Motor neuron (in vitro differentiated cells): ENCODE measurements at regions of chr11 and their contacts with region 1.

Region 1: GRCh38 chr11:69296890-69297786 is 3.2 kb downstream of the MYEOV start:
- ATAC-seq: peak; percentile 51 to 90 (median 82)
- H3K4me3 ChIP-seq: no peak overlapping the region
- H3K27ac ChIP-seq: no peak overlapping the region
- H3K4me1 ChIP-seq: peaks cover 0 to 9% of the 10 kb centered on the region in 2 donors

Region 2: DNA sequence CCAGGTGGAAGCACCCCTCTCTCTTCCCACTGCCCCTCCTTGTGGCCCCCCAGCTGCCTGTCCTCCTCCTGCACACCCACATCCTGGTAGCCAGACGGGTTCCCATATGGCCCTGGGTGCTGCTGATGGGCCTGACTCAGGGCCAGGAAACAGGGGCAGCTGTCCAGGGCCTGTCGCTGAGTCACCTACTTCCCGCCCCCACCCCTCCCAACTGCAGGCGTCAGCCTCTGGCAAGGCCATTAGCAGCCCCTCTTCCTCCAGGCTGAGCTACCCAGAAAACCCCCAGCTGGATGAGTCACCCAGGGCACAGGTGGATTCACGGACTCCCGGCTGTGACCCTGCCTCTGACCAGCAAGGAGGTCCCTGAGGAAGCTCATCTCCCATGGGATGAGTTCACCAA is 619.7 kb before region 1 on chr11:
- in situ Hi-C with region 1: no loop called
- ATAC-seq: peak; percentile 75 to 98 (median 96)
- H3K4me3 ChIP-seq: no peak overlapping the region
- H3K27ac ChIP-seq: no peak overlapping the region
- H3K4me1 ChIP-seq: peaks cover 0 to 8% of the 10 kb centered on the region in 2 donors

Region 3: DNA sequence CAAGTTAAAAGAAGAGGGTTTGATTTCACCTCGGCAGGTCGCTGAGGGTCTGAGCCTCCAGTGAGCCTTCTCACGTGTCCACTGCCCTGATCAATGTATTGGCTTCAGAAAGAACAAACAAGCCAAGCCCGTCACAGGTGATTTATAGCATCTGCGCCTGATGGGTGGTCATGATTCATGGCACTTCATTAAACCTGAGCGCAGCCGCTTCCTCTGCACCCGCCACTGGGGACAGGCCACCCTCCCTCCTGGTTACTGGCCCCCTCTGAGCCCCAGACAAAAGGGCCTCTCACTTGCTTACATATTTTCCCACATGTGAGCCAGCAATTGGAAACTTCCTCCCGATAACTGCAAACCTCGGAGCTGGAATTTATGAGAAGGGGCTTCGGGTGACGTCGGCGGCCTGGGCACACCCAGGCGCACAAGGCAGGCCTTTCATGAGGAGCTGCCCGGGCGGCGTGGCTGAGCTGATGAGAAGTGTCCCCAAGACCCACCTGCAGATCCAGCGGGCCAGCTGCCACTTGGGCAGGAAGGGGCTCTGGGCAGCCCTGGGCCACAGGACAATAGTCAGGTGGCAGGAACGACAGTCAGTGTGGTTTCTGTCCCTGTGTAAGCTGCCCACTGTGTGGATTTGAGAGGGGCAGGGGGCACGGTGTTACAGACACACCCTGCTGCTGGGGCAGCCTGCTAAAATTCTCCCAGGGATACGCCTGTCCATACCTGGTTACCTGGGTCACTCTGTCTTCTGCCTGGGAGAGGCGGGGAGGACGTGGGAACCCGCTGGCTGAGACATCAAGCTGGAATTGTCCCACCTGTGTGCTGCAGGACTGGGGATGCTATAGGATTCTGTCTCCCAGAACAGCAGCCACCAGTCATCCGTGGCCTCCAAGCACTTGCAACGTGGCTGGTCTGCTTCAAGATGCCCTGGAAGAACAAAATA is 120.3 kb after region 1 on chr11:
- in situ Hi-C with region 1: no loop called
- ATAC-seq: peak in 7 of 8 experiments; percentile 22 to 92 (median 75)
- H3K4me3 ChIP-seq: no peak overlapping the region
- H3K27ac ChIP-seq: peak overlapping the region; percentile 5 to 18
- H3K4me1 ChIP-seq: peaks cover 19 to 32% of the 10 kb centered on the region in 2 donors

Region 4: DNA sequence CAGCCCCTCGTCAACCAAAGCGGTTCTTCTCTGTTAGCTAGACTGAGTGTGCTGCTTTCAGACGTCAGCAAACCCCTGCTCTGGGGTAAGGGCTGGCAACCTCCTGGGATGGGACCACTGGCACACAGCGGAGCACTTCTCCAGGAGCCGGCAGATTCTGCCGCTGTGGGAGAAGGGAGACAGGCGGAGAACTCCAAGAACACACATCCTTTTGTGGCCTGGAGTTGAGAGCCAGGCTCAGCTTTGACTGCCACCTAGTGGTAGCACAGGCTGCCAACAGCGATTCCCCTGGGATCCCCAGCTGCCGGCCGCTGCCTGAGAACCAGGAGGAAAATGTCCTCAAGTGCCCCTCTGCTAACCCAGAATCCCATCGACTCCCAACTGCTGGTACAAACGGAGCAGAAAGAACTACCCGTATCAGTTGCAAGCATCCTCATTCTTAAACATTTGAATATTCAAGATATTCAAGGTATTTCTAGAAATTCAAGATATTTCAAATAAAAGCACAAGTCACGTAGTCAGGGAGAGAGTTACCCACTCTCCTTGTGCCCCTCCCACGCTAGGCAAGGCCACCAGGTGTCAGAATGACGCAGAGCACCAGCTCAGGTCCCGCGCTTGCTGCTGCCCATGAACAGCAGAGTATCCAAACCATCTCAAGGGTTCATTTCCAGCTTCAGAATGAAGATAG is 373.2 kb after region 1 on chr11:
- in situ Hi-C with region 1: loop called in 1 of 9 experiments (anchors 25 kb)
- ATAC-seq: peak; percentile 10 to 65 (median 55)
- H3K4me3 ChIP-seq: no peak overlapping the region
- H3K27ac ChIP-seq: no peak overlapping the region
- H3K4me1 ChIP-seq: peaks cover 6 to 11% of the 10 kb centered on the region in 2 donors